Activated B cell treated with CpG ODN at 0.5 μM for 24 hours (primary cell): ENCODE measurements at regions of chr14 and their contacts with region 1.

Region 1: DNA sequence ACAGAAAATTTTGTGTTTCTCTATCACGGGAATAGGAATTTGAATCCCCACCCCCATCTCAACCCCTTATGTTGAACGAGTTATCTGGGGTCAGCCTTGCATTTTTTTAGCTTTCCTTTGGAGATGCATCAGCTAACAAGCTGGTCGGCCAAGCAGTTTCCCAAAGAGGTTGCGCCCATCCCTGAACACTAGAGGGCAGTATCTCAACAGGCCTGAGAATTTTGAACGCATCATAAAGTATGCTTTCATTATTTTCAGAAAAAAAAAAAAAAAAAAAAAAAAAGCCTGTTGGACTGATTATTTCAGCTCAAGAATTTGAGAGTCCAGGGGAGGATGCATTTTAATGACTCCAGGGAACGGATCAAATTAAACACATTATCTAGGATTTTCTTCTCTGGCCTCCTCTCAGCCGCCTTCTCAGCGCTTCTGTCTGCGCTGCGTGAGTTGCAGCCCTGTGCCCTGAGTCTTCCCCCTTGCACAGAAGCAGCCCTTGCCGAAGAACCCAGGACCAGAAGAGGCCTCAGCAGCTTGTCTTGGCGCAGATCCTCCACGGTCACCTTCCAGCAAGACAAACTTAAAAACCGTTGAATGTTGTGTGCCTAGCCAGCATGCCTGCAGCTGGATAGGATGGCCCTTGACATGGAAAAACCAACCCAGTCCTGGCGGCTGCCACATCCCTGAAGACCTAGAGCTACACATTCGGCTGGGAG is 76.6 kb upstream of the GZMB start:
- DNase-seq: no peak
- ATAC-seq: no peak
- H3K4me3 Mint-ChIP-seq: no peak overlapping the region
- H3K27ac Mint-ChIP-seq: no peak overlapping the region
- H3K4me1 Mint-ChIP-seq: peaks cover 31% of the 10 kb centered on the region
- H3K27me3 Mint-ChIP-seq: peaks cover 3% of the 10 kb centered on the region
- CTCF ChIP-seq: peak; percentile 33

Region 2: DNA sequence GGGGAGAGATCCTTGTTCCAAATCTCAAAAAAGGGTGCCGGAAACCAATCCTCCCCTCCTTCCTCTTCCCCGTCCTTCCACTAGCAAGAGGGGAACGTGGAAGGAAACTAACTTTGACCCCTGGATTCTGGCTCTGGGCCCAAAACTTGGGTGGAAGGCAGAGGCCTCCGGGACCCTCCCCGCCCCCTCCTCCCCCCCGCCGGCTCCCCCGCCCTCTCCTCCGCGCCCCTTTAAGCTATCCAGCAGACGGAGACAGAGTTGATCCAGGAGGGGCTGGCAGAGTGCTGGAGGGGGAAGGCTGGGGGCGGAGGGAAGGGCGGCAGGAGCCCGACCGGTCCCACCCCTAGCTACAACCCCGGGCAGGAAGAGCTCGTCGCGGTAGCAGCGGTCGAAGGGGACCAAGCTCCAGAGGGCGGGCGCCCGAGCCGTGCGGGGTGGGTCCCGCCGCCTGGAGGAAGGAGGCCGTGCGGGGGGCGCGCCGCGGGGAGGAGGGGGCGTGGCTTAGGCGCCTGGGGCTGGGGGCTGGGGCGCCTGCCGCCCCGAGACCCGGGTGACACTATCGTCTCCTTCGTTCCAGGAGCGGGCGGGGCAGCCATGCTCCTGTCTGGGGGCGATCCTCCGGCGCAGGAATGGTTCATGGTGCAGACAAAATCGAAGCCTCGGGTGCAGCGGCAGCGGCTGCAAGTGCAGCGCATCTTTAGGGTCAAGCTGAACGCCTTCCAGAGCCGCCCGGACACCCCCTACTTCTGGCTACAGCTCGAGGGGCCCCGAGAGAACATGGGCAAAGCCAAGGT is 311.7 kb before region 1 on chr14 and contains the start of gene NYNRIN:
- CTCF ChIA-PET with region 1: no interaction called
- POLR2A ChIA-PET with region 1: no interaction called
- intact Hi-C with region 1: no loop called
- DNase-seq: peak; percentile 30
- ATAC-seq: peak; percentile 89
- H3K4me3 Mint-ChIP-seq: peak within 1 kb of the TSS; percentile 71
- H3K27ac Mint-ChIP-seq: no peak within 1 kb of the TSS
- H3K4me1 Mint-ChIP-seq: peaks cover 11% of the 10 kb centered on the region
- H3K27me3 Mint-ChIP-seq: peaks cover 30% of the 10 kb centered on the region
- CTCF ChIP-seq: no peak
- total RNA-seq, gene NYNRIN: 0.02 and 0.04 TPM in 2 replicates

Region 3: GRCh38 chr14:24673534-24674203 is 36.9 kb before region 1 on chr14:
- CTCF ChIA-PET with region 1: interaction called, 12 read pairs
- POLR2A ChIA-PET with region 1: interaction called, 13 read pairs
- intact Hi-C with region 1: loop called (anchors 5 kb)
- DNase-seq: no peak
- ATAC-seq: peak; percentile 64
- H3K4me3 Mint-ChIP-seq: peak overlapping the region; percentile 82
- H3K27ac Mint-ChIP-seq: peak overlapping the region; percentile 95
- H3K4me1 Mint-ChIP-seq: peaks cover 72% of the 10 kb centered on the region
- H3K27me3 Mint-ChIP-seq: no peaks in the 10 kb centered on the region
- CTCF ChIP-seq: no peak

Region 4: GRCh38 chr14:24695265-24696241 is 15.0 kb before region 1 on chr14:
- CTCF ChIA-PET with region 1: interaction called, 12 read pairs
- POLR2A ChIA-PET with region 1: interaction called, 5 read pairs
- intact Hi-C with region 1: no loop called
- DNase-seq: no peak
- ATAC-seq: peak; percentile 59
- H3K4me3 Mint-ChIP-seq: no peak overlapping the region
- H3K27ac Mint-ChIP-seq: no peak overlapping the region
- H3K4me1 Mint-ChIP-seq: peaks cover 32% of the 10 kb centered on the region
- H3K27me3 Mint-ChIP-seq: no peaks in the 10 kb centered on the region
- CTCF ChIP-seq: no peak

Region 5: GRCh38 chr14:25150934-25151790 is 440.6 kb after region 1 on chr14:
- CTCF ChIA-PET with region 1: interaction called, 8 read pairs
- POLR2A ChIA-PET with region 1: interaction called, 4 read pairs
- intact Hi-C with region 1: loop called (anchors 1 kb)
- DNase-seq: no peak
- ATAC-seq: no peak
- H3K4me3 Mint-ChIP-seq: no peak overlapping the region
- H3K27ac Mint-ChIP-seq: no peak overlapping the region
- H3K4me1 Mint-ChIP-seq: no peaks in the 10 kb centered on the region
- H3K27me3 Mint-ChIP-seq: no peaks in the 10 kb centered on the region
- CTCF ChIP-seq: peak; percentile 53